IMR-90 (cell line): ENCODE measurements at regions of chr16 and their contacts with region 1.

Region 1: GRCh38 chr16:47779201-47780016 is 318.3 kb downstream of the PHKB start:
- DNase-seq: peak; percentile 28
- ATAC-seq: peak; percentile 48
- H3K4me3 ChIP-seq: peak overlapping the region; percentile 28; the same call in 1 of the 2 replicates
- H3K27ac ChIP-seq: no peak overlapping the region
- H3K4me1 ChIP-seq: peaks cover 2% of the 10 kb centered on the region; the same call in 1 of the 2 replicates
- H3K27me3 ChIP-seq: no peaks in the 10 kb centered on the region
- CTCF ChIP-seq: no peak
- POLR2A ChIP-seq: no peak
- RAD21 ChIP-seq: no peak

Region 2: DNA sequence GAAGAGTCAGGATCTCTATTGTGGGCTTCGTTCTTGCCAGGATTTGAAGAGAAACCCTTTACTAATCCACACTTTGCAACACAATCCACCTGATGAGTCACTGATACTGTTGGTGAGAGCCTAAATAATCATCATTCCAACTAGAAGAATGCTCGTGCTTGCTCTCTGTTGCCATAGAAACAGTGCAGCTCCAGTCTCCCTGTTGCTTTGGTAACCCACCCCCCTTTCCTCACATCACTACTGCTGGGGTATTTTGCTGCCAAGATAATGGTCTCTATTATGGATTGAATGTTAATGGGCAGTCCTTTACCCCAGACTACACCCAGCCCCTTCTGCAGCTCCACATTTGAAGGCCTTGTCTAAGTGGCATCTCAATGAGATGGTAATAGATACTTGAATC is 186.0 kb after region 1 on chr16:
- CTCF ChIA-PET with region 1: no interaction called
- POLR2A ChIA-PET with region 1: no interaction called
- dilution Hi-C with region 1: no loop called
- in situ Hi-C with region 1: no loop called
- intact Hi-C with region 1: loop called (anchors 10 kb)
- DNase-seq: peak; percentile 50
- ATAC-seq: no peak
- H3K4me3 ChIP-seq: no peak overlapping the region
- H3K27ac ChIP-seq: no peak overlapping the region
- H3K4me1 ChIP-seq: no peaks in the 10 kb centered on the region
- H3K27me3 ChIP-seq: no peaks in the 10 kb centered on the region
- CTCF ChIP-seq: no peak
- POLR2A ChIP-seq: no peak
- RAD21 ChIP-seq: no peak